Naive thymus-derived CD8-positive, alpha-beta T cell (primary cell): ENCODE measurements at regions of chrX and their contacts with region 1.

Region 1: DNA sequence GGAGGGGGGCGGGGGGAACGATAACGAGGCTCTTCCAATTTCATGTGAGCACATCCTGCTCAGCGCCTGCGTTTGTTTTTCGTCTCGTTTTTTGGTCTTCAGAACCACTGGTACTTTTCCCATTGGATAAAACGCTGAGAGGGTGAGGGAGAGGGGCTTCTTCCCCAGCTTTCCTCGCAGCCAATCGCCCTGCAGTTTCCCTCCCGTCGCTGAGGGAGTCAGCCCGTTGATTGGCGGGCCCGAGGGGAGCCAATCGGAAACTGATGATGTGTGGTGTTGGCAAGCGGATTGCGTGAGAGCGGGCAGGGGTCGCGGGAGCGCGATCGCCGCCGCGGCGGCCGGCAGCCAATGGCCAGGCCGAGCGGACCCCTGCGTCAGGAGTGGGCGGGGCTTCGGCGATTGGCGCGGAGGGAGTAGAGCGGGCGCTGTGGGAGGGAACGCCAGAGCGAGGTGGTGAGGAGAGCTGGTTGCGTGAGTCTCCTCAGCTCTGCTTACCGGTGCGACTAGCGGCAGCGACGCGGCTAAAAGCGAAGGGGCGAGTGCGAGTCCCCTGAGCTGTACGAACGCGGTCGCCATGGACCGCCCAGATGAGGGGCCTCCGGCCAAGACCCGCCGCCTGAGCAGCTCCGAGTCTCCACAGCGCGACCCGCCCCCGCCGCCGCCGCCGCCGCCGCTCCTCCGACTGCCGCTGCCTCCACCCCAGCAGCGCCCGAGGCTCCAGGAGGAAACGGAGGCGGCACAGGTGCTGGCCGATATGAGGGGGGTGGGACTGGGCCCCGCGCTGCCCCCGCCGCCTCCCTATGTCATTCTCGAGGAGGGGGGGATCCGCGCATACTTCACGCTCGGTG is at the start of gene TSPYL2:
- DNase-seq: peak; percentile 82 to 97 (median 93)
- ATAC-seq: peak; percentile 83 to 84
- H3K4me3 Mint-ChIP-seq: peak within 1 kb of the TSS; percentile 82 to 96 (median 91)
- H3K27ac Mint-ChIP-seq: peak within 1 kb of the TSS; percentile 95 to 98 (median 98)
- H3K4me1 Mint-ChIP-seq: peaks cover 20 to 50% (median 44%) of the 10 kb centered on the region in 4 donors
- H3K27me3 Mint-ChIP-seq: peaks cover 0 to 3% (median 0%) of the 10 kb centered on the region in 5 donors
- polyA plus RNA-seq, gene TSPYL2: 12.7 to 32.2 (median 27.1) TPM

Region 2: GRCh38 chrX:53224860-53225797 is 143.0 kb after region 1 on chrX and contains the start of gene KDM5C:
- POLR2A ChIA-PET with region 1: interaction called, 19 read pairs
- DNase-seq: peak; percentile 68 to 99 (median 84)
- ATAC-seq: peak; percentile 82 to 86
- H3K4me3 Mint-ChIP-seq: peak within 1 kb of the TSS; percentile 92 to 99 (median 96)
- H3K27ac Mint-ChIP-seq: peak within 1 kb of the TSS; percentile 97 to 99 (median 99)
- H3K4me1 Mint-ChIP-seq: peaks cover 4 to 39% (median 35%) of the 10 kb centered on the region in 4 donors
- H3K27me3 Mint-ChIP-seq: no peaks in the 10 kb centered on the region
- polyA plus RNA-seq, gene KDM5C: 21.0 to 26.5 (median 23.6) TPM